ENCODE measurements at regions of chr1 and their contacts with region 1.

Region 1: GRCh38 chr1:6245086-6245868 is 1.3 kb downstream of the HES3 start:
- DNase-seq: peak in 1 of 2 donors; percentile 55
- H3K4me3 ChIP-seq: no peak overlapping the region
- CTCF ChIP-seq: peak in 1 of 3 donors; percentile 45
- POLR2A ChIP-seq: no peak

Region 2: GRCh38 chr1:6052543-6053205 is 192.6 kb before region 1 on chr1:
- intact Hi-C with region 1: loop called (anchors 10 kb)
- DNase-seq: peak in 1 of 2 donors; percentile 45
- H3K4me3 ChIP-seq: no peak overlapping the region
- CTCF ChIP-seq: no peak
- POLR2A ChIP-seq: no peak

Region 3: DNA sequence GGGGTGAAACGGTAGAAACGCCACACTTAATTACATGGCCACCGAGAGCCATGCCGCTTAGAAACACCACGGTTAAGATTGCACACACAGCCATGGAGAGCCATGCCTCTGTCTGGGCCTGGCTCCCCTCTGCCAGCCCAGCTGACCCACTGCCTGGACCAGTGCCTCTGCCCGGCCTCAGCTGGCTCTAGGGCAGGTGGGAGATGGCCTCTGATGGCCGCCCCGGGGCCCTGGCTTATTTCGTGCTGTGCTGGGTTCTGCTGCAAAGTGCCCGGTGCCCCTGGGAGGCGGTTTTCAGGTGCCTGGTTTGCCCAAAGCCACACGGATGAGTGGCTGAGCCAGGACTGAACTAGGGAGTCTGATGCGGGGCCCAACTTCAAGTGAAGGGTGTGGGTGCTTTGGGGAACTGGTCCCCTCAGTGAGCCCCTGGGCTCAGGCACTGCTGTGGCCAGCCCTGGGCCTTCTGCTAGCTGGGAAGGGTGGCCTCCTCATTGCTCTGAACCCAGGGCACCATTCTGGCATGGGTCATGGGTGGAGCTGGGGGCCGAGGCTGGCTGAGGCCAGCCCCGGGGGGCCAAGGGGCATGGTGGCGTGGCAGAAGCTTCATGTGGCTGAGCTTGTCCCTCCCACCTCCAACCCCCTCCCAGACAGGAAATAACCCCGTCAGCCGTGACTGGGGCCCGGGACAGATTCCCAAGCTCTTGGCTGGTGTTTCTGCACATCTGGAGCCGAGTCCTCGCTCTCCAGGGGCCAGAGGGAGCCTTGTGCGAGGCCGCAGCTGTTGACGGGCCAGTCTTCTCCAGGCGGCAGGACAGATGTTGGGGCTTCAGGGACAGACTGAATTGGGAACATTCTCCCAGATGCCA is 17.5 kb after region 1 on chr1:
- intact Hi-C with region 1: no loop called
- DNase-seq: no peak
- H3K4me3 ChIP-seq: no peak overlapping the region
- CTCF ChIP-seq: no peak
- POLR2A ChIP-seq: no peak

Region 4: DNA sequence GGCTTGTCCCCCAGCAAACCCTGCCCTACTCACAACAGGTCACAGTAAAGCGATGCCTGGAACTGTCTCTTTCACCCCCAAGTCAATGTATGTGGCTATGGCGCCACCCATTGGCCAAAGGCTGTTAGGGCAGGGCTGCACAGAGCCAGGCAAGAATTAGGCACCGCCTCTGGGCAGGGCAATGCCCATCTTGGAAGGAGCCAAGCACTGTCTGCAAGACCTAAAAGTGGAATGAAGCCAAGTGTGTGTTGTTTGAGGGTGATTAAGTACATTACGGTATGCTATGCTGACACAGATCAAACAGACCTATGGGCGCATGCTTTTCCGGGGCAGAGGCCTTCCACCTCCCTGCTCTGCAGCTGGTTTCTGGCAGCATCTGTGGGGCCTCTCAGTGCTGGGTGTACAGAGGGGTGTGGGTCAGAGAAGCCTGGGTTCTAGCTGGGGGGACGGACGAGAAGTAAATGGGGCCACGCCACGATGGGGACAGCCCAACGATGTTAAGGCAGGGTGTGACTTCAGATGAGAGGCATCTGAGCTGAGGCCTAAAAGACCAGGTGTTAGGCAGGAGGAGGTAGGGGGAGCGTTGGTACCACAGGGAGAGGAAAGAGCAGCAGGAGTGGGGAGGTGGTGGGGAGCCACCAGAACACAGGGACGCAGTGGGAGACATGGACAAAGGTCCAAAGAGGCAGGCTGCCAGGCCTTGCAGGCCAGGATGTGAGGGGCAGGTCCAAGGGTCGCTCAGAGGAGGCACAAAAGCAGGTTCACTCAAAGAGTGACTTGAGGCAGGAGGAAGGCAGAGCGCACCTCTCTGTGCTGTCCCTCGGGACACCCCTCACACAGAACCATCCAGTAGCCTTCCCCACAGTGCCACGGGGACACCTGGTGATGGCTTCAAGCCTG is 98.5 kb after region 1 on chr1:
- intact Hi-C with region 1: loop called (anchors 2 kb)
- DNase-seq: peak; percentile 76 to 90
- H3K4me3 ChIP-seq: no peak overlapping the region
- CTCF ChIP-seq: peak in 1 of 3 donors; percentile 55
- POLR2A ChIP-seq: no peak

Region 5: DNA sequence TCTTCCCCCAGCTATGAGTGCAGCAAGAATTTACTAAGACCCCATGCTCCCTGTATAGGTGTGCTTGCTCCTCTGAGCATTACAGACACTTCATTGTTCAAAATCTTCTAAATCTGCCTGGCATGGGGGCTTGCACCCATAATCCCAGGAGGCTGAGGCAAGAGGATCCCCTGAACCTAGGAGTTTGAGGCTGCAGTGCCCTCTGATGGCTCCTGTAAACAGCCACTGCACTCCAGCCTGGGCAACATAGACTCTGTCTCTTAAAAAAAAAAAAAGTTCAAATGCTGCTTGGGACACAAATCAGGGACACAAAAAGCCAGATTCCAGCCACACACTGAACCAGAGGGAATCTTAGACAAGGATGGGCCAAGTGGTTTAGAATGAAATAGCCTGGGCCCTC is 151.7 kb after region 1 on chr1:
- intact Hi-C with region 1: loop called (anchors 5 kb)
- DNase-seq: no peak
- H3K4me3 ChIP-seq: no peak overlapping the region
- CTCF ChIP-seq: no peak
- POLR2A ChIP-seq: no peak

Region 6: GRCh38 chr1:6591222-6591621 is 345.9 kb after region 1 on chr1:
- intact Hi-C with region 1: no loop called
- DNase-seq: no peak
- H3K4me3 ChIP-seq: no peak overlapping the region
- CTCF ChIP-seq: no peak
- POLR2A ChIP-seq: no peak

Measured in lower leg skin (tissue), 4 donors.